Natural killer cell (primary cell): ENCODE measurements at regions of chrX and their contacts with region 1.

Region 1: GRCh38 chrX:12701628-12702027 is 89.6 kb upstream of the PRPS2 start:
- DNase-seq: peak in 1 of 2 donors; percentile 33
- ATAC-seq: no peak
- H3K4me3 ChIP-seq: no peak overlapping the region
- H3K4me3 Mint-ChIP-seq: no peak overlapping the region
- H3K27ac ChIP-seq: no peak overlapping the region
- H3K27ac Mint-ChIP-seq: no peak overlapping the region
- H3K4me1 ChIP-seq: no peaks in the 10 kb centered on the region
- H3K4me1 Mint-ChIP-seq: no peaks in the 10 kb centered on the region
- H3K27me3 ChIP-seq: no peaks in the 10 kb centered on the region
- H3K27me3 Mint-ChIP-seq: peaks cover 3 to 19% of the 10 kb centered on the region in 2 donors
- CTCF ChIP-seq: no peak

Region 2: DNA sequence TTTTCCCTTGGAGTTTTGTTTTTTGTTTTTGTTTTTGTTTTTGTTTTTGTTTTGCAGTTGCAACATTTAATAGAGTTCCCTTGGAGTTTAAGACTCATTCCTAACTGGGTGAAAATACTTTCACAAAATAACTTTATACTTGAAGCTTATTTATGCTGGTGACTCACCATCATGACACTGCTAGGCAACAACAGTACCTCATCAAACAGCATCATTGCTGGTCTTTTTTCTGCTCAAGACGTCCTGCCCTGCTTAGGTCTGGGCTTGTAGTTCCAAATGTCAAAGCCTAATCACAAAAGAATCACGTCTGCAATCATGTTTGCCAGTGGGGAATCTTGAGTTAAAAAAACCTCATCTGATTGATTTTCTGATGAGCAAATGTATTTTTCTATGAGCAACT is 16.1 kb before region 1 on chrX:
- intact Hi-C with region 1: no loop called
- DNase-seq: no peak
- ATAC-seq: no peak
- H3K4me3 ChIP-seq: no peak overlapping the region
- H3K4me3 Mint-ChIP-seq: no peak overlapping the region
- H3K27ac ChIP-seq: no peak overlapping the region
- H3K27ac Mint-ChIP-seq: no peak overlapping the region
- H3K4me1 ChIP-seq: no peaks in the 10 kb centered on the region
- H3K4me1 Mint-ChIP-seq: no peaks in the 10 kb centered on the region
- H3K27me3 ChIP-seq: no peaks in the 10 kb centered on the region
- H3K27me3 Mint-ChIP-seq: peaks cover 0 to 36% of the 10 kb centered on the region in 2 donors
- CTCF ChIP-seq: no peak

Region 3: GRCh38 chrX:12901486-12901885 is 199.9 kb after region 1 on chrX:
- intact Hi-C with region 1: loop called (anchors 10 kb)
- DNase-seq: peak; percentile 43 to 75
- ATAC-seq: peak; percentile 58 to 81 (median 60)
- H3K4me3 ChIP-seq: no peak overlapping the region
- H3K4me3 Mint-ChIP-seq: no peak overlapping the region
- H3K27ac ChIP-seq: no peak overlapping the region
- H3K27ac Mint-ChIP-seq: no peak overlapping the region
- H3K4me1 ChIP-seq: peaks cover 5% of the 10 kb centered on the region
- H3K4me1 Mint-ChIP-seq: peaks cover 5% of the 10 kb centered on the region in 2 donors
- H3K27me3 ChIP-seq: no peaks in the 10 kb centered on the region
- H3K27me3 Mint-ChIP-seq: peaks cover 2 to 42% of the 10 kb centered on the region in 2 donors
- CTCF ChIP-seq: peak; percentile 65